ENCODE measurements at regions of chr10 and their contacts with region 1.

Region 1: DNA sequence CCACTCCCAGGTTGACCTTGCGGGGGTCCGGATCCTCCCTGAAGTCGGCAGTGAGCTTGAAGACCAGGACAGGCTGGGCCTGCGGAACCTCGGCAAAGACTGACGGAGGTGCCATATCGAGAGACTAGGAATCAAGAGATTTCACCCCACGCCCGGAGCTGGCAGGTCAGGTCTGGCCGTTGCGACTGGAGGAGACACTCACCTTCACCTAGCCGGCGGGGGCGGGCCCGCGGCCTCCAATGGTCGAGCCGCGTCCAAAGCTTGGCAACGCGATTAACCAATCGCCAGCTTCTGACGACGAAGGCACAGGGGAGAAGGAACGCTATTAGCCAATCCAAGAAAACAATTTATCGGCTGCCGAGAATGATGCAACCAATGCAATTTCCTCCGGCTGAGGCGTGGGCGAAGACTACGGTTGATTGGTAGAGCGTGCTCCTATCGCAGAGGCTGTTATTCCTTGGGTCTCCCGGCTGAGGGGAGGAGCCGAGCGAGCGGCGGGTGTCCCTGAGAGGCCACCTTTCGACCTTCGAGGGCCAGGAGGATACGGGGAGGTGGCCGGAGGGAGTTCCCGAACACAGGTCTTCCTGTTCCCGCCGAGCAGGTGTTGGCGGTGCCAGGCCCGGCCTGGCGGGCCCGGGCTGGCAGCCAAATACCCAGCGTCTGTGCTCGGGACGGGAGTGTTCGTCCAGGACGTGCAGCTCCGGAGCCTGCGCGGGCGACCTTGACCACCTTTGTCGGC is at the start of gene GOT1:
- DNase-seq: peak; percentile 99
- ATAC-seq: peak; percentile 97
- H3K4me3 ChIP-seq: peak within 1 kb of the TSS; percentile 87 to 99 (median 93)
- H3K27ac ChIP-seq: peak within 1 kb of the TSS; percentile 75
- H3K4me1 ChIP-seq: peaks cover 55% of the 10 kb centered on the region
- H3K27me3 ChIP-seq: no peaks in the 10 kb centered on the region; a peak in 1 of 5 replicates
- CTCF ChIP-seq: no peak
- EP300 ChIP-seq: peak in 1 of 2 experiments; percentile 69; a peak in 1 of 4 replicates
- POLR2A ChIP-seq: peak; percentile 80 to 92
- RAD21 ChIP-seq: peak; percentile 55
- total RNA-seq, gene GOT1: 102 and 138 TPM in 2 replicates

Region 2: GRCh38 chr10:99057936-99058690 is 372.5 kb before region 1 on chr10:
- CTCF ChIA-PET with region 1: no interaction called
- POLR2A ChIA-PET with region 1: no interaction called
- in situ Hi-C with region 1: no loop called
- intact Hi-C with region 1: no loop called
- DNase-seq: no peak
- ATAC-seq: no peak
- H3K4me3 ChIP-seq: no peak overlapping the region
- H3K27ac ChIP-seq: no peak overlapping the region
- H3K4me1 ChIP-seq: no peaks in the 10 kb centered on the region
- H3K27me3 ChIP-seq: no peaks in the 10 kb centered on the region
- CTCF ChIP-seq: no peak
- EP300 ChIP-seq: no peak
- POLR2A ChIP-seq: no peak
- RAD21 ChIP-seq: no peak

Region 3: GRCh38 chr10:99412099-99412498 is 18.5 kb before region 1 on chr10:
- CTCF ChIA-PET with region 1: no interaction called
- POLR2A ChIA-PET with region 1: interaction called, 25 read pairs
- in situ Hi-C with region 1: no loop called
- intact Hi-C with region 1: loop called (anchors 2 kb)
- DNase-seq: peak; percentile 75
- ATAC-seq: peak; percentile 98
- H3K4me3 ChIP-seq: no peak overlapping the region
- H3K27ac ChIP-seq: peak overlapping the region; percentile 49
- H3K4me1 ChIP-seq: peaks cover 20% of the 10 kb centered on the region
- H3K27me3 ChIP-seq: no peaks in the 10 kb centered on the region
- CTCF ChIP-seq: peak; percentile 64
- EP300 ChIP-seq: peak in 1 of 2 experiments; percentile 53; a peak in 2 of 4 replicates
- POLR2A ChIP-seq: no peak
- RAD21 ChIP-seq: peak; percentile 28; the same call in 1 of the 2 replicates

Region 4: DNA sequence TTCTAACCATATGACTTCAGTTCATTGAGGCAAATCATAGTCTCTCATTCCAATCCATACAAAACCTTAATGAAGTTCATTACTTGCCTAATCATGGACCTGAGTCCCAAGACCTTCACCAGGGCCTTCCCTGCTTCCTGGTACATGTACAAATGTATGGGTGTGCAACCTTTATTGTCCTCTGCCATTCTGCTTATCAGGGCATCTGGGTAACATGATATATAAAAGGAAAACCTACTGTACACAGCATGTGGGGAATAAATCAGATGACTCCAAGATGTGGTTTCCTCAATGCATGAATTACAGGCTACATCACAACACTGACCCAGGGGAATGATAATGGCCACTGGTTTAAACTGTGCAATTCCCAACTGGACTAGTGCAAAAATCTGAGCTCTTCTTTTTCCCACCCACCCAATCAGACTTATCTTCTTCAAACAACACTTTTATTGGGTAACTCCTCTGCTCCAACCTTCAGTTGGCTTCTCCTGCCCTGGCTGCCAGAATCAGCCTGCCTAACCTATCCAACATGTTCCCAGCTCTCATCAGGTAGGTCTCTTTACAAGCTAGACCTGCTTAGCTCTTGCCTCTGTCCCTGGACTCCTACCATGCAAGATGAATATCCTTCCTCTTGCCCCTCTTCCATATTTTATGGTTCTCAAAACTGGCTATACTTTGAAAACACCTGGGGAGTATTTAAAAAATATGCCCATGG is 11.6 kb before region 1 on chr10:
- CTCF ChIA-PET with region 1: no interaction called
- POLR2A ChIA-PET with region 1: interaction called, 43 read pairs
- in situ Hi-C with region 1: no loop called
- intact Hi-C with region 1: no loop called
- DNase-seq: no peak
- ATAC-seq: no peak
- H3K4me3 ChIP-seq: no peak overlapping the region
- H3K27ac ChIP-seq: no peak overlapping the region
- H3K4me1 ChIP-seq: peaks cover 50% of the 10 kb centered on the region
- H3K27me3 ChIP-seq: no peaks in the 10 kb centered on the region
- CTCF ChIP-seq: no peak
- EP300 ChIP-seq: no peak
- POLR2A ChIP-seq: no peak
- RAD21 ChIP-seq: no peak

Region 5: DNA sequence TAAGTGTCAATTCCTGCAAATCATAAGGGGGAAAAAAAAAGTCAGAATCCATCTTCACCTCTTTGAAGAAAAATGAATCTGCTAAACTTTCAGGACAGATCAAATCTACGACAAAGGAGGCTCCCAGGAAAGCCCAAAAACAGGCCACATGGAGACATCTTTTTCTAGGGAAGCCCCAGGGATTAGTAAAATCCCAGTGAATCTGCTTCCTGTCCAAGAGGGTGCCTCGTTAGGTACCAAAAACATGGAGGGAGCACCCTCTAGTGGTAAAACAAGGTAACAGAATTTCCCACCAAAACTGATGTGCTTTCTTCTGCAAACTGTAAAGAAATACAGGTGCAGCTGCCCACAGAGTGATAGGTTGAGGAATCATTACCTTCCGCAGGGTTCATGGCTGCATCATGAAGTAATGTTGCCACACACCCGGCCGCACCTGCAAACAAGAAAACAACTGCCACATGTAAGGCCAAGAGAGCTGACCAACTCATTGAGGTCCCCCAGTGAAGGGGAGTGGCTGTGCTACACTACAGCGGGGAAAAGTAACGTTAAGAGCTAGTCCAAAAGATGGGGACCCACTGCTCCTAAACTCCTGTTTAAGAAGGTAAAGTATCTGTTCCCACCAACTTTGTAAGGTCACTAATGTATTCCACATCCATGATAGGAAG is 181.7 kb after region 1 on chr10:
- CTCF ChIA-PET with region 1: interaction called, 13 read pairs
- POLR2A ChIA-PET with region 1: interaction called, 5 read pairs
- in situ Hi-C with region 1: loop called (anchors 5 kb)
- intact Hi-C with region 1: no loop called
- DNase-seq: peak; percentile 63
- ATAC-seq: peak; percentile 70
- H3K4me3 ChIP-seq: no peak overlapping the region
- H3K27ac ChIP-seq: no peak overlapping the region
- H3K4me1 ChIP-seq: peaks cover 8% of the 10 kb centered on the region
- H3K27me3 ChIP-seq: no peaks in the 10 kb centered on the region
- CTCF ChIP-seq: peak; percentile 84
- EP300 ChIP-seq: no peak
- POLR2A ChIP-seq: no peak
- RAD21 ChIP-seq: peak; percentile 82